Heart left ventricle (tissue), 16 donors: ENCODE measurements at regions of chr7 and their contacts with region 1.

Region 1: DNA sequence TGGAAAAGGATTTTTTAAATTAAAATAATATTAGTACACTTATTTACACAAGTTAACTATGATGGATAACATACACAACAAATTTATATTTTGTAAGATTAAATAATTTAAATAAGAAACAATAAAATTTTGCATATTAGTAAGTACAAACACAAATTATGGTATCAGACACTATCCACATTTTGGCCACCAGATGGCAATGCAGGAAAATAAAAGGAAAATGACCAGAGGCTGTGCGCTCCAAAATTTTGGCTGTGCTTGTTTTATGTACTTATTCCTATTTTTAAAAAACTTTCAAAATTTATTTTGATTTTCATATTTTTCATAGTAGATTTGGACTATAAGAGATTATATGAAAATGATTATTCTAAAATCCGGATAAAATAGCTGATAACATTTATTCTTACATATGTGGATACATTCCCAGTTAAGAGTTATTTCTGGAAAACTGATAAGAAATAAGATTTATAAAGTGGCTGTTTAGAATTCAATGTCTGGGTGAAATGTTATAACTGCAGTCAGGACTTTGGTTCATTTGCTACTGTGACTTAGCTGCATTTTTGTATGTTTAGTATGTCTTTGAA is 274.7 kb upstream of the HGF start:
- DNase-seq: peak in 3 of 5 donors; percentile 23 to 36 (median 24)
- ATAC-seq: peak in 2 of 4 donors; percentile 32 to 62
- H3K4me3 ChIP-seq: no peak overlapping the region
- H3K27ac ChIP-seq: no peak overlapping the region
- H3K4me1 ChIP-seq: peaks cover 0 to 13% (median 5%) of the 10 kb centered on the region in 12 donors
- H3K27me3 ChIP-seq: no peaks in the 10 kb centered on the region
- CTCF ChIP-seq: peak; percentile 60 to 82 (median 70)
- POLR2A ChIP-seq: no peak

Region 2: GRCh38 chr7:82234457-82235049 is 190.0 kb after region 1 on chr7:
- intact Hi-C with region 1: loop called in 3 of 10 experiments (anchors 10 kb)
- DNase-seq: no peak
- ATAC-seq: peak in 1 of 4 donors; percentile 55
- H3K4me3 ChIP-seq: no peak overlapping the region
- H3K27ac ChIP-seq: no peak overlapping the region
- H3K4me1 ChIP-seq: peaks cover 0 to 23% (median 6%) of the 10 kb centered on the region in 12 donors
- H3K27me3 ChIP-seq: no peaks in the 10 kb centered on the region
- CTCF ChIP-seq: peak; percentile 37 to 74 (median 60)
- POLR2A ChIP-seq: no peak

Region 3: DNA sequence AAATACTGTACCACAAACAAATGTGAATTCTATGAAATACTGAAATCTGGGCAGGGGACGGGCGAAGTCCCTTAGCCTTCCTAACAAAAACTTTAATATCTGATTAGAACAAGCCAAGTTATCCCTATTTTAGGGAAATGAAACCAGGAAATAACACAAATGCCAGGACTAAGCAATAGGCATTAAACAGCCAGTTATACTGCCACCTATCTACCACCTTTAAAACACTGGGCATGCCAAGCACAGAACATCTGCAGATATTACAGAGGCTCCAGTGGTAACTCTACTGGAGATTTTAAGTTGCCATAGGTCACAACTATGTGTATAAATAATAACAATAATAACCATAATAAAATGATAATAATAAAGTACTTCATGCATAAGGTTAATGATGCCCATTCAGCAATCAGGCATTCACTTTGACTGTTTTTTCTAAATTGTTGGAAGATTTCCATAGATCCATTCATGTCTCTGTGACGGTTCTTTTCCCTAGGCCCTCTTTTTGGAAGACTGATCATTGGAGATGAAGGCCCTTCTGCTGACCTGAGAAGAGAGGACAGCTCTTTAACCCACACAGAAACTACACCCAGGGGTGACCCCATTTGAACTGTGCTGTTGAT is 203.3 kb after region 1 on chr7:
- intact Hi-C with region 1: no loop called
- DNase-seq: no peak
- ATAC-seq: peak in 2 of 4 donors; percentile 50 to 54
- H3K4me3 ChIP-seq: no peak overlapping the region
- H3K27ac ChIP-seq: no peak overlapping the region
- H3K4me1 ChIP-seq: peaks cover 0 to 30% (median 3%) of the 10 kb centered on the region in 12 donors
- H3K27me3 ChIP-seq: no peaks in the 10 kb centered on the region
- CTCF ChIP-seq: peak in 11 of 12 donors; percentile 19 to 58 (median 45)
- POLR2A ChIP-seq: no peak

Region 4: DNA sequence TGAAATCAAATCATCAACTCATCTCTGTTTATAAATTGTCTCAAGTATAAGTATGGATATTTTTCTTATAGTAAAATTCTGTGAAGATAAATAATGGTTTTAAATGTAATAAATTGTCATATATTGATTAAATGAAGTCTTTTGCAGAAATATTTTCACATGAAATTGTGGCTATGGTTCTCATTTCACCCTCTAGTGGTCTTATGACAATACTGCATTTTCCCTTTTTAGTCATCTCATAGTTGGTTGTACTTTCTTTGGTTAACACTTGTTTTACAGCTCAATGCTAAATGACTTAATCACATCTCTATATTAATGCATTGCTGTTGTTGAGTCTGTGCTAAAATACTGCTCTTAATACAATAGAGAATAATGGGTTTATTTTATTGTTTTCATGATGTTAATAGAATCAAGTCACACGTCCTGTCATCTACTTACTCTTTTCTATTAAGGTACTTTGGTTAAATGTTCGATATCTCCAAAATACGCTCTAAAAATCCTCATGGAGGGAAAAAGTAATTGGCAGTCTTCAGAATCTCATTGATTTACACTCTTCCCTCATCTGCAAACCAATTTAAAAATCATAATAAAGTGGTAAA is 437.0 kb after region 1 on chr7:
- intact Hi-C with region 1: loop called in 6 of 10 experiments (anchors 5 to 10 kb)
- DNase-seq: no peak
- ATAC-seq: no peak
- H3K4me3 ChIP-seq: no peak overlapping the region
- H3K27ac ChIP-seq: no peak overlapping the region
- H3K4me1 ChIP-seq: peaks cover 0 to 5% (median 0%) of the 10 kb centered on the region in 12 donors
- H3K27me3 ChIP-seq: no peaks in the 10 kb centered on the region
- CTCF ChIP-seq: peak; percentile 61 to 84 (median 73)
- POLR2A ChIP-seq: no peak

Region 5: DNA sequence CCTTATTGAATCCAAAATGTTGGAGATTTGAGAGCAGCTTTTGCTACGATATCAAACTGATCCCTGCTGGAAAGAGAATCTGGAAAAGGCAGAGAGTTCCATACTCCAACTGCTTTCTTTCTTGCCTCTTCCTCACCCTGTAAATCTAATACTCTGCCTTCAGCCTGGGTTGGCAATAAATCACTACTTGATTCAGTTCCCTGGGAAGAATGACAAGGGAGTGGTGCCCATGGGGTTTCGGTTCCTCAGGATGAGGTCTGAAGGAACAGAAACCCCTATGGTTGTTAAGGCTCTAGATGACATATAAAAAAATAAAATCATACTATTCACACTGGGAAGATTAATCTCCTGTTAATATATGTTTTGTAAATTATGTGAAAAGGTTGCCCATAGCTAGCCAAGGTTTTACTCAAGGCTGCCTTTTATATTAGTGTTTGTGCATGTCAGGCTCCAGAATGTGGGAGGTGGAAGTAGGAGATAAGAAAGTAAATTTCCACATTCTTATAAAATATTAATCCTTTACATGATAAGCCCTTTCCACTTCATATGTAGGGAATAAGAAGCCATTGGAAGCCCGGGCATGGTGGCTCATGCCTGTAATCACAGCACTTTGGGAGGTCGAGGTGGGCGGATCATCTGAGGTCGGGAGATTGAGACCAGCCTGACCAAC is 505.2 kb after region 1 on chr7:
- intact Hi-C with region 1: no loop called
- DNase-seq: no peak
- ATAC-seq: no peak
- H3K4me3 ChIP-seq: no peak overlapping the region
- H3K27ac ChIP-seq: no peak overlapping the region
- H3K4me1 ChIP-seq: no peaks in the 10 kb centered on the region
- H3K27me3 ChIP-seq: no peaks in the 10 kb centered on the region
- CTCF ChIP-seq: no peak
- POLR2A ChIP-seq: no peak

Region 6: GRCh38 chr7:82566752-82567151 is 522.2 kb after region 1 on chr7:
- intact Hi-C with region 1: loop called in 5 of 10 experiments (anchors 2 to 5 kb)
- DNase-seq: peak in 1 of 5 donors; percentile 54
- ATAC-seq: peak in 1 of 4 donors; percentile 49
- H3K4me3 ChIP-seq: no peak overlapping the region
- H3K27ac ChIP-seq: no peak overlapping the region
- H3K4me1 ChIP-seq: peaks cover 0 to 15% (median 0%) of the 10 kb centered on the region in 12 donors
- H3K27me3 ChIP-seq: no peaks in the 10 kb centered on the region
- CTCF ChIP-seq: no peak
- POLR2A ChIP-seq: no peak

Region 7: DNA sequence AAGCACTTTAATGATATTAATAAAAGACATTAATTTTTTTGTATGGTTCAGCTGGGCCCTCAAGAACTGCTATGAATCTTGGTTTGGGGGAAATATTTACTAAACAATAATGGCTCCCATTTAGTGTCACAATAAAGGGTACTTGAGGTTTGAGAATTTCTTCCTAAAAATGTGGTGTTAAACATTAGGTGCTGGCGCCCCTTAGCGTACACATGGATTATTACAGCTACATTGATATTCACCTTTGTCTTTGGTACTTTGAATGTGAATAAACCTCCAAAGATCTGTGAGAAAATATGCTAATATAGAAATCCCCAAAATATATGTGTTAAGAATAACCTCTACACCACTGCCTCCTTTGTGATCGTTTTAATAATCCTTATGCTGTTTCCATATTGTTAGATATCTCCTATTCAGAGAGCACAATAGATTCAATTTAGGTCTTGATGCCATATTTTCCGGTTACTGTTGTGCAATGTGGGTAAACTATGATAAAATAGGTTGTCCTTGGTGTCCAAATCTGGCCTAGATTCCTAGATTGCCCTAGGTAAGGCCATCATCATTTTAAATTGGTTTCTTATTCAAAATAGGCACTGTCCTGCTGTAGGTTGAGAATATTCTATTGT is 560.8 kb after region 1 on chr7:
- intact Hi-C with region 1: loop called in 5 of 10 experiments (anchors 5 to 10 kb)
- DNase-seq: no peak
- ATAC-seq: no peak
- H3K4me3 ChIP-seq: no peak overlapping the region
- H3K27ac ChIP-seq: no peak overlapping the region
- H3K4me1 ChIP-seq: no peaks in the 10 kb centered on the region
- H3K27me3 ChIP-seq: no peaks in the 10 kb centered on the region
- CTCF ChIP-seq: peak; percentile 50 to 82 (median 68)
- POLR2A ChIP-seq: no peak